ENCODE measurements at regions of chr1 and their contacts with region 1.

Region 1: DNA sequence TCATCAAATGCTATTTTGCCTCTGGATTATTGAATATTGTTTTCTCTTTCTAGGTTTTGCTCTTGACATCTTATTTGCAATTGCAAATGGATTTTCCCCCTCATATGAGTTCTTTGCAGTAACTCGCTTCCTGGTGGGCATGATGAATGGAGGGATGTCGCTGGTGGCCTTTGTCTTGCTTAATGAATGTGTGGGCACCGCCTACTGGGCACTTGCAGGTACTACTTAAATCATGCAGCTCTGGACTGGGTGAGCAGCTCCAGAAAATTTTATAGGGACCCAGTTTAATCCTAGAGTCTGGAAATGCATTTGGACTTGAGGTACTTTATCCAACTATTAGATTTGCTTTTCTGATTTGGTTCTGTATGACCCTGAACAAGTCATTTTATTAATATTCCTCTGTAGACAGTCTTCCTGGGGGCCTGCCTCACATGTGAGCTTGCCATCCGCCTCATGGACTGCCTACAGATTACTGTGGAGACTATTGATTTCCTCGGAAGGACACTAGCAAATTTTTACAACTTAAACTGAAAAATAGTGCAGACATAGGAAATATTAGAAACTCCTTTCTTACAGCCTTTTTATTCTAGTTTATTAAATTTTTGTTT is 44.5 kb downstream of the SLC22A15 start:
- DNase-seq: peak; percentile 79
- ATAC-seq: peak; percentile 86
- H3K4me3 Mint-ChIP-seq: no peak overlapping the region
- H3K27ac Mint-ChIP-seq: no peak overlapping the region
- H3K4me1 Mint-ChIP-seq: no peaks in the 10 kb centered on the region
- H3K27me3 Mint-ChIP-seq: peaks cover 3% of the 10 kb centered on the region
- CTCF ChIP-seq: peak; percentile 78

Region 2: GRCh38 chr1:115807723-115808122 is 213.0 kb before region 1 on chr1:
- CTCF ChIA-PET with region 1: interaction called, 18 read pairs
- POLR2A ChIA-PET with region 1: no interaction called
- intact Hi-C with region 1: loop called (anchors 2 kb)
- DNase-seq: peak; percentile 69
- ATAC-seq: peak; percentile 53
- H3K4me3 Mint-ChIP-seq: no peak overlapping the region
- H3K27ac Mint-ChIP-seq: no peak overlapping the region
- H3K4me1 Mint-ChIP-seq: no peaks in the 10 kb centered on the region
- H3K27me3 Mint-ChIP-seq: peaks cover 15% of the 10 kb centered on the region
- CTCF ChIP-seq: peak; percentile 71

Region 3: DNA sequence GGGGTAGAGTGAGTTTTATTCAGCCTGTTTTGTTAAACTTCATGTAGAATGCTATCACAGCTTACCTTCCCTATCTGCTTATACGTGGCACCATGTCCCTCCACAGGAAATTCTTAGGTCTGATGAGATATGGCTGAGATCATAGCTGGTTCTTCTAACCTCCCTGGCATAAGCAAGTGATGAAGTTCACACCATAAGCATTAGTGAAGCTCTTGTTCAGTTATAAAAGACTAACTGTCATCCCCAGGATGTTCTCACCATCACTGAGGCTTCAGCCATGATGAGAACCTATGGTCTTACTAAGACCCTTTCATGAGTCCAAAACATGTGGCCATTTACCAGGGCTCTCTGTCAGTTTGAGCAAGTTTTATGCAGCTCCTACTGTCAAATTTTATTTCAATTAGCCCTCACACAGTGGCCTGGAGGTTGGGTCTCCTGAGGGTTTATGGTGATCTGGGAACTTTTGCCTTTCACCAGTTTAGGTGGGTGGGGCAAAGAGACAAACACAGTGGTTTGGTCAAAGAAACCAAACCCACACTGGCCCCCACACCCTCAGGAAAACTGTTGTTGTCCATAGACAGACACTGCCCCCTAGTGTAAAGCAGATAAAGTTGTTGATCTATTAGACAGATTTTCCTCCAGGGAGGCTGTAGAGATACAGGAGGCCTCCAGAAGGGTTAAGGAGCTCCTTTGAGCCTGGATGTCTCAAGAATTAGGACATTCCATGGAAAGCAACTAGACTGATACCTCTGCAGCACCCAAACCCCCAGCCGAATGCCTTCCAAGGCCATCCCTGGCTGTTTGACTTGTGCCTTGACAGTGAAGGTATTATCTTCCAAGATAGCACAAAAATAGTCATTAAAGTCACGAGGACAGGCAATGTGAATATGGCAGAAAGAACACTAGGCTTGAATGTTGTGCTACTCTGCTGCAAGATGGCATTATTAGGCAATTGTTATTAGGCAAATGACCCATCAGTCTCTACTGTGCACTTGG is 39.5 kb before region 1 on chr1:
- CTCF ChIA-PET with region 1: interaction called, 17 read pairs
- POLR2A ChIA-PET with region 1: no interaction called
- intact Hi-C with region 1: no loop called
- DNase-seq: peak; percentile 18
- ATAC-seq: peak; percentile 53
- H3K4me3 Mint-ChIP-seq: no peak overlapping the region
- H3K27ac Mint-ChIP-seq: no peak overlapping the region
- H3K4me1 Mint-ChIP-seq: peaks cover 4% of the 10 kb centered on the region
- H3K27me3 Mint-ChIP-seq: peaks cover 21% of the 10 kb centered on the region
- CTCF ChIP-seq: peak; percentile 63

Region 4: GRCh38 chr1:115991909-115992308 is 28.9 kb before region 1 on chr1:
- CTCF ChIA-PET with region 1: interaction called, 14 read pairs
- POLR2A ChIA-PET with region 1: no interaction called
- intact Hi-C with region 1: no loop called
- DNase-seq: peak; percentile 2
- ATAC-seq: no peak
- H3K4me3 Mint-ChIP-seq: no peak overlapping the region
- H3K27ac Mint-ChIP-seq: no peak overlapping the region
- H3K4me1 Mint-ChIP-seq: peaks cover 6% of the 10 kb centered on the region
- H3K27me3 Mint-ChIP-seq: peaks cover 1% of the 10 kb centered on the region
- CTCF ChIP-seq: no peak

Region 5: DNA sequence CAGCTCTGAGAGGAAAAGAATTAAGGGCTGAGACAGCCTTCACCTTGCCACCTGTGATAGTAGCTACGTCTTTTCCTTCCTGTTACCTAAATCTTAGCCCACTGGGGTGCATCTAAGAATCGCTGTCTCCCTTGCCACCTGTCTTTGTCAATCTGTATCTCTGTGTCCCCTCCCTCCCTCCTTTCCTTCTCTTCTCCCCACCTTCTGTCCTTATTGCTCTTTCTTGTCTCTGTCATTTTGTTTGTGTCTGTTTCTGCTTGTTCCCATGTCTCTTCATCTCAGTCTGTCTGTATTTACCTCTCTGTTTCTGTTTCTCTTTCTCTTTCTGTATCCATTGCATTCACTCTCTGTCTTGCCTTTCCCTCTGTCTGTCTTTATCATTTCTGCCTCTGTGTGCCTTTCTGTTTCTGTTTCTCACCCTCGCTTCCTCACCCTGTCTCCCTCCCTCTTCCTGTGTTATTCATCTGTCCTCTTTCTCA is 14.2 kb before region 1 on chr1:
- CTCF ChIA-PET with region 1: interaction called, 14 read pairs
- POLR2A ChIA-PET with region 1: no interaction called
- intact Hi-C with region 1: no loop called
- DNase-seq: peak; percentile 4
- ATAC-seq: peak; percentile 94
- H3K4me3 Mint-ChIP-seq: peak overlapping the region; percentile 73
- H3K27ac Mint-ChIP-seq: peak overlapping the region; percentile 87
- H3K4me1 Mint-ChIP-seq: peaks cover 10% of the 10 kb centered on the region
- H3K27me3 Mint-ChIP-seq: no peaks in the 10 kb centered on the region
- CTCF ChIP-seq: no peak

Region 6: GRCh38 chr1:116033322-116033721 is 12.6 kb after region 1 on chr1:
- CTCF ChIA-PET with region 1: interaction called, 13 read pairs
- POLR2A ChIA-PET with region 1: no interaction called
- intact Hi-C with region 1: no loop called
- DNase-seq: no peak
- ATAC-seq: no peak
- H3K4me3 Mint-ChIP-seq: no peak overlapping the region
- H3K27ac Mint-ChIP-seq: no peak overlapping the region
- H3K4me1 Mint-ChIP-seq: no peaks in the 10 kb centered on the region
- H3K27me3 Mint-ChIP-seq: peaks cover 2% of the 10 kb centered on the region
- CTCF ChIP-seq: no peak